CD14-positive monocyte (primary cell): ENCODE measurements at regions of chrX and their contacts with region 1.

Region 1: GRCh38 chrX:21745756-21746155 is 12.2 kb downstream of the SMPX start:
- DNase-seq: peak in 2 of 3 donors; percentile 1 to 4
- H3K4me3 ChIP-seq: no peak overlapping the region
- H3K4me3 Mint-ChIP-seq: no peak overlapping the region
- H3K27ac ChIP-seq: no peak overlapping the region
- H3K27ac Mint-ChIP-seq: no peak overlapping the region
- H3K4me1 ChIP-seq: no peaks in the 10 kb centered on the region
- H3K4me1 Mint-ChIP-seq: no peaks in the 10 kb centered on the region
- H3K27me3 ChIP-seq: peaks cover 11 to 16% of the 10 kb centered on the region in 2 donors
- H3K27me3 Mint-ChIP-seq: peaks cover 6 to 11% (median 9%) of the 10 kb centered on the region in 3 donors
- CTCF ChIP-seq: peak; percentile 62

Region 2: DNA sequence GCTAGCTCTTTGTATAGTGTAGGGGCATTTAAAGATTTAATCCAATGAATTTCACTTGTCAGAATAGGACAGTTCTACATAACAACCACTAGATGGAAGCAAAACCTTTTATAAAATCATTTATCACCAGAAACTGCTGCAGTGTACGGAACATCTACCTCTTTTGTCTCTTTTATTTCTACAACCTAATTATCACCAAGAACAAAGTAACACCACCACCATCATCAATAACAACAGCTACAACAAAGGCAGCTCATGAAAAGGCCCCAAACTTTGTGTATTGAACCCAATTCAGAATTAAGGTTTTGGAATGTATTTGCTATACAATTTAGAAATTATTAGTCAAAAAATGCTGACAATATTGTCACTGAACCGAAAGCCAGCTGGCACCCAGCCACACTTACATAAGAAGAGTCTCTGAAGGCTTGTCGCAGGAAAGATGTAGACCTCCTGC is 1218.2 kb before region 1 on chrX:
- intact Hi-C with region 1: loop called in 1 of 2 experiments (anchors 10 kb)
- DNase-seq: peak in 2 of 3 donors; percentile 11 to 20
- H3K4me3 ChIP-seq: no peak overlapping the region
- H3K4me3 Mint-ChIP-seq: peak overlapping the region in 1 of 2 donors; percentile 26
- H3K27ac ChIP-seq: no peak overlapping the region
- H3K27ac Mint-ChIP-seq: no peak overlapping the region
- H3K4me1 ChIP-seq: peaks cover 19 to 21% of the 10 kb centered on the region in 2 donors
- H3K4me1 Mint-ChIP-seq: peaks cover 22% of the 10 kb centered on the region
- H3K27me3 ChIP-seq: peaks cover 10 to 11% of the 10 kb centered on the region in 2 donors
- H3K27me3 Mint-ChIP-seq: peaks cover 3 to 19% (median 12%) of the 10 kb centered on the region in 3 donors
- CTCF ChIP-seq: peak; percentile 58

Region 3: DNA sequence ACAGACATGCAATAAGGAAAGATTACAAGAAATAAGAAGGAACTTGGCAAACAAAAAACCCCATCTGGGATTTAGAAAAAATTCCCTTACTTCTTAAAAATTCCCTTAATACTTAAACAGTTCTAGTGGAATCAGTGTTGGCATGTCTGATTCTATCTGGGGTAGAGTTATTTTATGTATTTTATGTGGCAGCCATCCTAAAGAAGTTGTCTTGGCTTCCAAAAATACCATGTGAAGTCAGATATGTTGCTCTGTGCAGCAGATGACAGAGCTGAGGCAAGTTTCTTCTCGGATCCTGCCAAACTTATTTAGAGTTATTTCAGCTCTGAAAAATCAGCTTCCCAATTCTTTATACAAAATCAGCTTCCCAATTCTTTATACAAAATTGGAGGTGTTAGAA is 124.7 kb after region 1 on chrX:
- intact Hi-C with region 1: no loop called
- DNase-seq: no peak
- H3K4me3 ChIP-seq: no peak overlapping the region
- H3K4me3 Mint-ChIP-seq: no peak overlapping the region
- H3K27ac ChIP-seq: no peak overlapping the region
- H3K27ac Mint-ChIP-seq: no peak overlapping the region
- H3K4me1 ChIP-seq: no peaks in the 10 kb centered on the region
- H3K4me1 Mint-ChIP-seq: no peaks in the 10 kb centered on the region
- H3K27me3 ChIP-seq: no peaks in the 10 kb centered on the region
- H3K27me3 Mint-ChIP-seq: peaks cover 0 to 11% (median 0%) of the 10 kb centered on the region in 3 donors
- CTCF ChIP-seq: no peak